Vagina (tissue), 2 donors: ENCODE measurements at regions of chr7 and their contacts with region 1.

Region 1: DNA sequence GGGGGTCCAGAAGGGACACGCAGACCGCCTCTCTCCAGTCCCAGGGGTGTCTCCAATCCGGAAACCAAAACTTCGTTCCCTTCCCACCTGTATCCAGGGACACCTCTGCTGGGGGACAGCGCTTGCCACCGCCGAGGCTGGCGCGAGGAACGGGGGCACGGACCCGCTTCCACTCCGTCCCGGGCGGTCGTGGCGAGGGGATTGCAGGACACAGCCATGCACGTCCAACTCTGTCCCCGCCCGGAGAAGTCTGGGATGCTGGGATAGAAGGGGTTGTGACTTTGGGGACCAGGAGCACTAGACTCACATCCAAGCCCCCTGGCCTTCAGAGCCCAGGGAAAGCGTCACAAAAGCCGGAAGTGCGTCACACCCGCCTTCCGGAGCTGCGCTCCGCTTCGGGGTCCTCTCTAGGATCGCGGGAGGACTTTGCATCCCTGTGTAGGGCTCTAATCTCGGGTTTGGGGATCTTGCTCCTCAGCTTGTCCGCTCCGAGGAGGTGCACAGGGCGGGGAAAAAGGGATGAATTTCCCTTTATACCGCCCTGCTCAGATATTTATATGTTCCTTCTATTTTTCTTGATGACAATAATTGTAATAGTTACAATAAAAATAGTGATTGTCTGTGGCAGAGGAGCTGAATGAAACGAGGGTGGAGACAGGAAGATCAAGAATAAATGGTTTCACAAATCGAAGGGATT is at the start of gene FAM200A:
- DNase-seq: no peak
- H3K4me3 ChIP-seq: peak within 1 kb of the TSS; percentile 87 to 95
- H3K27ac ChIP-seq: peak within 1 kb of the TSS; percentile 89
- H3K4me1 ChIP-seq: peaks cover 24% of the 10 kb centered on the region
- H3K27me3 ChIP-seq: no peaks in the 10 kb centered on the region
- CTCF ChIP-seq: no peak
- POLR2A ChIP-seq: peak in 1 of 2 donors; percentile 71
- total RNA-seq, gene FAM200A: 3.4 TPM

Region 2: DNA sequence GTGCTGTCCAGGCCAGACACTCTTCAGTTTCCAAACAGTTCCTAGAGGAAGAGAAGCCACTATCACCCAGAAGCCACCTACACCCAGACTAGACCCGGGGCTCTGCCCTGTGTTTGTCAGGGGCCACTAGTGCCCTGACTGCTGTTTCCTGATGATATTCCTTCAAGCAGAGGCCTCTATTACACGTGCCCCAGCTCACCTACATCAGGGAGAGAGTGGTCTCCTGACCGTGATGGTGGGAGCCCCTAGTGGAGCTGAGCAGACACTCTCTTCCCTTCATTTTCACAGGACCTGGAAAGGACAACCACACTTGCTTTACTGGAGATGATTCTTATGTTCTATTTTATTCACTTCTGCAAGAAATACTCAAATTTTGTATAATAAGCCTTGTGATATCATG is 61.0 kb before region 1 on chr7:
- intact Hi-C with region 1: no loop called
- DNase-seq: no peak
- H3K4me3 ChIP-seq: no peak overlapping the region
- H3K27ac ChIP-seq: no peak overlapping the region
- H3K4me1 ChIP-seq: no peaks in the 10 kb centered on the region
- H3K27me3 ChIP-seq: no peaks in the 10 kb centered on the region
- CTCF ChIP-seq: no peak
- POLR2A ChIP-seq: no peak

Region 3: DNA sequence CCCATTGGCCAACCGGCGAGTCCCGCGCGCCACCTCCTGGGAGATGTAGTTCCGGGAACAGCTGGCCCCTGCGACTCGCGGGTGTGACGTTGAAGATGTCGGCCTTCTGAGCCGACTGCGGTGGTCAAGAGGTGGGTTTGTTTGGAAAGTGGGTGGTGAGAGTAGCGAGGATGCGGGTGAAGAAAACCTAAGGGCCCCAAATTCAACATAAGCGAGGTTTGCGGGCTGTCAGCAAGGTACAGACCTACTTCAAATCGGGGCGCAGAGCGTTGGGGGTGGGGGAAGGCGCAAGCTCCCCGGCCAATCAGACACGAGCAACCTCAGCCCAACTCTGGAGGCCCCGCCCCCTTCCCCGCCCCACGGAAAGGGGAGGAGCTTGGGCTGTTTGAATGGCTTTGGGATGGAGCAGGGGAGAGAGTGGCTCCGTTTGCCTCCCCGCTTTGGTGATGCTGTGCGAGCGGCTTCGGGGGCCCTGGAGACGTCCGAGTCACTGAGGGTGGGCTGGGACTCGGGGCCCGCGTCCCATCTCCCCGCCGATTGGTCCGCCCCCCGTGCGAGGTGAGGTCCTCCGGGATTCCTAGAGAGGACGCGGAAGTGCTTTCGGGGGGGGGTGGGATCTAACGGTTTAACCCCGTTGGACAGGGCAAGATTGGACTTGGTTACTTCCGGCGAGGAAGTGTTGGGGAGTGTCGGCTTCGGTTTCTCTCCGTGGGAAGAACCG is 47.2 kb before region 1 on chr7 and contains the start of gene ZKSCAN5:
- intact Hi-C with region 1: loop called (anchors 5 kb)
- DNase-seq: peak; percentile 98 to 99
- H3K4me3 ChIP-seq: peak within 1 kb of the TSS; percentile 86 to 88
- H3K27ac ChIP-seq: peak within 1 kb of the TSS; percentile 90
- H3K4me1 ChIP-seq: peaks cover 33% of the 10 kb centered on the region
- H3K27me3 ChIP-seq: no peaks in the 10 kb centered on the region
- CTCF ChIP-seq: no peak
- POLR2A ChIP-seq: no peak
- total RNA-seq, gene ZKSCAN5: 7.1 TPM